Gastrocnemius medialis (tissue), 4 donors: ENCODE measurements at regions of chr16 and their contacts with region 1.

Region 1: GRCh38 chr16:7218936-7219335 is 113.7 kb upstream of the RBFOX1 start:
- DNase-seq: no peak
- ATAC-seq: no peak
- H3K4me3 ChIP-seq: no peak overlapping the region
- H3K27ac ChIP-seq: no peak overlapping the region
- H3K4me1 ChIP-seq: no peaks in the 10 kb centered on the region
- H3K27me3 ChIP-seq: no peaks in the 10 kb centered on the region
- CTCF ChIP-seq: no peak
- POLR2A ChIP-seq: no peak

Region 2: GRCh38 chr16:7161891-7162290 is 57.0 kb before region 1 on chr16:
- in situ Hi-C with region 1: loop called in 1 of 4 experiments (anchors 10 kb)
- intact Hi-C with region 1: no loop called
- DNase-seq: no peak
- ATAC-seq: no peak
- H3K4me3 ChIP-seq: no peak overlapping the region
- H3K27ac ChIP-seq: no peak overlapping the region
- H3K4me1 ChIP-seq: no peaks in the 10 kb centered on the region
- H3K27me3 ChIP-seq: no peaks in the 10 kb centered on the region
- CTCF ChIP-seq: no peak
- POLR2A ChIP-seq: no peak